Activated CD8-positive, alpha-beta memory T cell treated with anti-CD3 and anti-CD28 coated beads, Interleukin-2, amount 10 ng/mL, durations not matched to agents 7 days and 5 days (primary cell): ENCODE measurements at regions of chr5 and their contacts with region 1.

Region 1: GRCh38 chr5:80275347-80275746 is 19.5 kb upstream of the SERINC5 start:
- DNase-seq: no peak
- ATAC-seq: peak; percentile 49
- H3K4me3 Mint-ChIP-seq: no peak overlapping the region
- H3K27ac Mint-ChIP-seq: no peak overlapping the region
- H3K4me1 Mint-ChIP-seq: peaks cover 11% of the 10 kb centered on the region
- H3K27me3 Mint-ChIP-seq: no peaks in the 10 kb centered on the region

Region 2: GRCh38 chr5:80308526-80308925 is 33.2 kb after region 1 on chr5:
- CTCF ChIA-PET with region 1: interaction called, 11 read pairs
- DNase-seq: no peak
- ATAC-seq: no peak
- H3K4me3 Mint-ChIP-seq: no peak overlapping the region
- H3K27ac Mint-ChIP-seq: no peak overlapping the region
- H3K4me1 Mint-ChIP-seq: no peaks in the 10 kb centered on the region
- H3K27me3 Mint-ChIP-seq: no peaks in the 10 kb centered on the region

Region 3: GRCh38 chr5:80620211-80620610 is 344.9 kb after region 1 on chr5:
- CTCF ChIA-PET with region 1: no interaction called
- DNase-seq: no peak
- ATAC-seq: no peak
- H3K4me3 Mint-ChIP-seq: no peak overlapping the region
- H3K27ac Mint-ChIP-seq: no peak overlapping the region
- H3K4me1 Mint-ChIP-seq: peaks cover 15% of the 10 kb centered on the region
- H3K27me3 Mint-ChIP-seq: no peaks in the 10 kb centered on the region